ENCODE measurements at regions of chr19 and their contacts with region 1.

Region 1: GRCh38 chr19:43765109-43765876 is 10.5 kb upstream of the SMG9 start:
- DNase-seq: peak; percentile 68
- H3K4me3 ChIP-seq: no peak overlapping the region
- H3K27ac ChIP-seq: peak overlapping the region; percentile 61
- H3K4me1 ChIP-seq: peaks cover 17% of the 10 kb centered on the region
- H3K27me3 ChIP-seq: no peaks in the 10 kb centered on the region
- CTCF ChIP-seq: no peak
- POLR2A ChIP-seq: no peak

Region 2: GRCh38 chr19:43584484-43584883 is 180.8 kb before region 1 on chr19:
- CTCF ChIA-PET with region 1: no interaction called
- POLR2A ChIA-PET with region 1: no interaction called
- dilution Hi-C with region 1: no loop called
- intact Hi-C with region 1: no loop called
- DNase-seq: no peak
- H3K4me3 ChIP-seq: no peak overlapping the region
- H3K27ac ChIP-seq: no peak overlapping the region
- H3K4me1 ChIP-seq: no peaks in the 10 kb centered on the region
- H3K27me3 ChIP-seq: no peaks in the 10 kb centered on the region
- CTCF ChIP-seq: no peak
- POLR2A ChIP-seq: no peak

Region 3: GRCh38 chr19:43700395-43701000 is 64.8 kb before region 1 on chr19:
- CTCF ChIA-PET with region 1: interaction called, 6 read pairs
- POLR2A ChIA-PET with region 1: no interaction called
- dilution Hi-C with region 1: no loop called
- intact Hi-C with region 1: loop called (anchors 5 kb)
- DNase-seq: peak; percentile 69
- H3K4me3 ChIP-seq: no peak overlapping the region
- H3K27ac ChIP-seq: peak overlapping the region; percentile 95
- H3K4me1 ChIP-seq: peaks cover 12% of the 10 kb centered on the region
- H3K27me3 ChIP-seq: no peaks in the 10 kb centered on the region
- CTCF ChIP-seq: no peak
- POLR2A ChIP-seq: no peak

Region 4: DNA sequence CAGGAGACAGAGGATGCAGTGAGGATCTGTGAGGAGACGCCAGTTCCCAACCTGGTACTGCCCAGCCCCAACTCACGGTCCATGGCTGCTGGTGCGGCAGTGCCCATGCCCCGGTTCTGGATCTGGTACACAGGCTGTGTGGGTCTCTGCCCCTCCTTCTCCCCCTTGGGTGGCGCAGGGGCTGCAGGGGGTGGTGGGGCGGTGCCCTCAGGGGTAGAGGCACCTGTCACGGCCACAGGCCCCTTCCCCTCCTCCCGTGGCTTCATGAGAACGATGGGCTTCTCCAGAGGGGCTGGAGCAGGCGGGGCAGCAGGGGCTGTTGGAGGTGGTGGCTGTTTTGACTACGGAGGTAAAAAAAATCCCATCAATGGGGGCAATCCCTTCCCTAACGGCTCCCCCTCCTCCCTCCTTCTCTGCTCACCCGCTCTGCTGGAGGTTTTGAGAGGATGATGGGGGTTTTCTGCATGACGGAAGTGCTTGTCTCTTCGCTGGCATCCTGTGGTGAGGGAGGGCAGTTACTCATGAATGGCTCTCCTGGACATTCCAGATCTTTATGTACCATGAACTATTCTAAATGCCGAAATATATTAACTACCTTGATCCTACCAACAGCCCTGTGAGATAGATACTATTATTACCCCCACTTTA is 17.6 kb before region 1 on chr19:
- CTCF ChIA-PET with region 1: interaction called, 47 read pairs
- POLR2A ChIA-PET with region 1: interaction called, 6 read pairs
- dilution Hi-C with region 1: no loop called
- intact Hi-C with region 1: no loop called
- DNase-seq: no peak
- H3K4me3 ChIP-seq: no peak overlapping the region
- H3K27ac ChIP-seq: no peak overlapping the region
- H3K4me1 ChIP-seq: peaks cover 5% of the 10 kb centered on the region
- H3K27me3 ChIP-seq: no peaks in the 10 kb centered on the region
- CTCF ChIP-seq: no peak
- POLR2A ChIP-seq: no peak

Region 5: GRCh38 chr19:43754503-43755255 is 10.6 kb before region 1 on chr19 and contains the start of gene SMG9:
- CTCF ChIA-PET with region 1: interaction called, 40 read pairs
- POLR2A ChIA-PET with region 1: interaction called, 3 read pairs
- dilution Hi-C with region 1: no loop called
- intact Hi-C with region 1: loop called (anchors 1 kb)
- DNase-seq: peak; percentile 99
- H3K4me3 ChIP-seq: peak within 1 kb of the TSS; percentile 67 to 92 (median 74)
- H3K27ac ChIP-seq: peak within 1 kb of the TSS; percentile 97
- H3K4me1 ChIP-seq: peaks cover 34% of the 10 kb centered on the region
- H3K27me3 ChIP-seq: no peaks in the 10 kb centered on the region
- CTCF ChIP-seq: no peak
- POLR2A ChIP-seq: peak; percentile 50
- total RNA-seq, gene SMG9: 45.0 and 53.3 TPM in 2 replicates

Measured in endothelial cell of umbilical vein (primary cell).